Activated naive CD4-positive, alpha-beta T cell treated with anti-CD3 and anti-CD28 coated beads for 36 hours (primary cell): ENCODE measurements at regions of chr1 and their contacts with region 1.

Region 1: GRCh38 chr1:157878059-157878458 is 36.5 kb upstream of the CD5L start:
- DNase-seq: no peak
- H3K4me3 Mint-ChIP-seq: no peak overlapping the region
- H3K27ac Mint-ChIP-seq: no peak overlapping the region
- H3K4me1 Mint-ChIP-seq: no peaks in the 10 kb centered on the region
- H3K27me3 Mint-ChIP-seq: peaks cover 15% of the 10 kb centered on the region

Region 2: GRCh38 chr1:157948312-157949073 is 70.4 kb after region 1 on chr1:
- CTCF ChIA-PET with region 1: no interaction called
- intact Hi-C with region 1: loop called (anchors 1 kb)
- DNase-seq: peak; percentile 26
- H3K4me3 Mint-ChIP-seq: no peak overlapping the region
- H3K27ac Mint-ChIP-seq: no peak overlapping the region
- H3K4me1 Mint-ChIP-seq: no peaks in the 10 kb centered on the region
- H3K27me3 Mint-ChIP-seq: peaks cover 9% of the 10 kb centered on the region

Region 3: GRCh38 chr1:158180741-158181576 is 302.9 kb after region 1 on chr1 and contains the start of gene CD1D:
- CTCF ChIA-PET with region 1: no interaction called
- intact Hi-C with region 1: no loop called
- DNase-seq: peak; percentile 9
- H3K4me3 Mint-ChIP-seq: peak within 1 kb of the TSS; percentile 69
- H3K27ac Mint-ChIP-seq: no peak within 1 kb of the TSS
- H3K4me1 Mint-ChIP-seq: peaks cover 13% of the 10 kb centered on the region
- H3K27me3 Mint-ChIP-seq: peaks cover 69% of the 10 kb centered on the region
- total RNA-seq, gene CD1D: not detected